B cell (primary cell): ENCODE measurements at regions of chr2 and their contacts with region 1.

Region 1: GRCh38 chr2:73736855-73737779 is at the start of gene TPRKB:
- DNase-seq: peak; percentile 95
- ATAC-seq: peak; percentile 99
- H3K4me3 ChIP-seq: peak within 1 kb of the TSS; percentile 68 to 97 (median 88)
- H3K4me3 Mint-ChIP-seq: peak within 1 kb of the TSS; percentile 91
- H3K27ac ChIP-seq: peak within 1 kb of the TSS; percentile 59 to 78
- H3K27ac Mint-ChIP-seq: peak within 1 kb of the TSS; percentile 83
- H3K4me1 ChIP-seq: peaks cover 8 to 15% of the 10 kb centered on the region in 2 donors
- H3K4me1 Mint-ChIP-seq: peaks cover 16% of the 10 kb centered on the region
- H3K27me3 ChIP-seq: no peaks in the 10 kb centered on the region
- H3K27me3 Mint-ChIP-seq: no peaks in the 10 kb centered on the region
- CTCF ChIP-seq: no peak
- total RNA-seq, gene TPRKB: 24.3 and 31.2 TPM in 2 replicates

Region 2: GRCh38 chr2:72638600-72639194 is 1098.4 kb before region 1 on chr2:
- CTCF ChIA-PET with region 1: no interaction called
- POLR2A ChIA-PET with region 1: no interaction called
- intact Hi-C with region 1: no loop called
- DNase-seq: no peak
- ATAC-seq: no peak
- H3K4me3 ChIP-seq: no peak overlapping the region
- H3K4me3 Mint-ChIP-seq: no peak overlapping the region
- H3K27ac ChIP-seq: no peak overlapping the region
- H3K27ac Mint-ChIP-seq: no peak overlapping the region
- H3K4me1 ChIP-seq: no peaks in the 10 kb centered on the region
- H3K4me1 Mint-ChIP-seq: no peaks in the 10 kb centered on the region
- H3K27me3 ChIP-seq: no peaks in the 10 kb centered on the region
- H3K27me3 Mint-ChIP-seq: no peaks in the 10 kb centered on the region
- CTCF ChIP-seq: no peak

Region 3: GRCh38 chr2:73779467-73780236 is 42.5 kb after region 1 on chr2 and contains the start of gene DUSP11:
- CTCF ChIA-PET with region 1: no interaction called
- POLR2A ChIA-PET with region 1: no interaction called
- intact Hi-C with region 1: loop called (anchors 1 kb)
- DNase-seq: peak; percentile 98
- ATAC-seq: peak; percentile 100
- H3K4me3 ChIP-seq: peak within 1 kb of the TSS; percentile 64 to 95 (median 91)
- H3K4me3 Mint-ChIP-seq: peak within 1 kb of the TSS; percentile 100
- H3K27ac ChIP-seq: peak within 1 kb of the TSS; percentile 72 to 94
- H3K27ac Mint-ChIP-seq: peak within 1 kb of the TSS; percentile 99
- H3K4me1 ChIP-seq: peaks cover 11 to 18% of the 10 kb centered on the region in 2 donors
- H3K4me1 Mint-ChIP-seq: peaks cover 22% of the 10 kb centered on the region
- H3K27me3 ChIP-seq: no peaks in the 10 kb centered on the region
- H3K27me3 Mint-ChIP-seq: peaks cover 10% of the 10 kb centered on the region
- CTCF ChIP-seq: peak; percentile 95
- total RNA-seq, gene DUSP11: 42.2 and 43.0 TPM in 2 replicates

Region 4: GRCh38 chr2:74958274-74959105 is 1221.4 kb after region 1 on chr2 and contains the start of gene POLE4:
- CTCF ChIA-PET with region 1: no interaction called
- POLR2A ChIA-PET with region 1: no interaction called
- intact Hi-C with region 1: loop called (anchors 2 kb)
- DNase-seq: peak; percentile 96
- ATAC-seq: peak; percentile 91
- H3K4me3 ChIP-seq: peak within 1 kb of the TSS; percentile 44 to 80 (median 65)
- H3K4me3 Mint-ChIP-seq: peak within 1 kb of the TSS; percentile 88
- H3K27ac ChIP-seq: peak within 1 kb of the TSS; percentile 83 to 92
- H3K27ac Mint-ChIP-seq: peak within 1 kb of the TSS; percentile 91
- H3K4me1 ChIP-seq: peaks cover 6 to 17% of the 10 kb centered on the region in 2 donors
- H3K4me1 Mint-ChIP-seq: peaks cover 72% of the 10 kb centered on the region
- H3K27me3 ChIP-seq: no peaks in the 10 kb centered on the region
- H3K27me3 Mint-ChIP-seq: no peaks in the 10 kb centered on the region
- CTCF ChIP-seq: no peak
- total RNA-seq, gene POLE4: 53.3 and 56.0 TPM in 2 replicates